Motor neuron (in vitro differentiated cells): ENCODE measurements at regions of chr21 and their contacts with region 1.

Region 1: GRCh38 chr21:39518138-39518846 is 66.5 kb downstream of the SH3BGR start:
- ATAC-seq: peak; percentile 65 to 89 (median 76)
- H3K4me3 ChIP-seq: no peak overlapping the region
- H3K27ac ChIP-seq: no peak overlapping the region
- H3K4me1 ChIP-seq: peaks cover 11 to 12% of the 10 kb centered on the region in 2 donors

Region 2: DNA sequence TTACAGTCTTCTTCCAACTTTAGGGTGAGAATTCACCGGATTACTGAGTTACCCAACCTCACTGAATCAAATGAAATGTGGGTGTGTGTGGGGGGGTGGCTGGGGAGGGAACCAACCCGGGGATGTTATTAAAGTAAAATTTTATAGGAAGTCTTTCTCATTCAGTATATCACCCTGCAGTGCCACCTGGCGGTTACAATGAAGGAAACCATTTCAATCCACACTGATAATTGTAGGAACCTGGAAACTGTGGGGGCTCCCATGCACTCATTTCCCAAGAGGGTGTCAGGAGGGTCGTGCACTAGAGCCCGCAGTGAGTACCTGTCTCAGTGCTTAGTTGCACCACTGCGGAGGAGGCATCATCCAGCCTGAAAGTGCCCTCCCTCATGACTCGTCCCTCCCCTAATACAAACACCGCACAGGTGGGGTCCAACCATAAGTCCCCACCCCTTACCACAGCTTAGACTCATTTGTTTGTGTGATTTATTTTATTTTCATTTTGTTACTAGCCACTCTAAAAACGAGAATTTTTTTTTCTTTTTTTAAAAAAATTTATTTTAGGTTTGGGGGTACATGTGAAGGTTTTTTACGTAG is 197.6 kb after region 1 on chr21:
- in situ Hi-C with region 1: loop called in 6 of 9 experiments (anchors 5 to 25 kb)
- ATAC-seq: peak in 5 of 8 experiments; percentile 27 to 52 (median 39)
- H3K4me3 ChIP-seq: no peak overlapping the region
- H3K27ac ChIP-seq: no peak overlapping the region
- H3K4me1 ChIP-seq: no peaks in the 10 kb centered on the region

Region 3: DNA sequence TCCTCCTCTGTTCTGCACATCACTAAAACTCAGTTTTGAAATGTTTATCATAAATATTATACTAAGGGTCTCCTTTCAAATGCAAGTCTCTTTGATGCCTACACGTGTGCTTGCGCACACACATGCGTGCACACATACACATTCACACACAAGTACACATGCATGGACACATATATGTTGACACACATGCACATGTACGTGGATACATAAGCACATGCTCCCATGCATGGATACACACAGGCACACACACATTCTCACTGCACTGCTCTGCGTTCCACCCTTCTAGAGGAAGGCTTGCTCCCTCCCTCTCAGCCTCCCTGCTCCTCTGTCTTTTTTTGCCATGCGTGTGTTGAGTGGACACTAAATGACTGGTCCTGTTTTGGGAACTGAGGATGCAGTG is 511.6 kb after region 1 on chr21:
- in situ Hi-C with region 1: no loop called
- ATAC-seq: no peak
- H3K4me3 ChIP-seq: no peak overlapping the region
- H3K27ac ChIP-seq: no peak overlapping the region
- H3K4me1 ChIP-seq: no peaks in the 10 kb centered on the region

Region 4: DNA sequence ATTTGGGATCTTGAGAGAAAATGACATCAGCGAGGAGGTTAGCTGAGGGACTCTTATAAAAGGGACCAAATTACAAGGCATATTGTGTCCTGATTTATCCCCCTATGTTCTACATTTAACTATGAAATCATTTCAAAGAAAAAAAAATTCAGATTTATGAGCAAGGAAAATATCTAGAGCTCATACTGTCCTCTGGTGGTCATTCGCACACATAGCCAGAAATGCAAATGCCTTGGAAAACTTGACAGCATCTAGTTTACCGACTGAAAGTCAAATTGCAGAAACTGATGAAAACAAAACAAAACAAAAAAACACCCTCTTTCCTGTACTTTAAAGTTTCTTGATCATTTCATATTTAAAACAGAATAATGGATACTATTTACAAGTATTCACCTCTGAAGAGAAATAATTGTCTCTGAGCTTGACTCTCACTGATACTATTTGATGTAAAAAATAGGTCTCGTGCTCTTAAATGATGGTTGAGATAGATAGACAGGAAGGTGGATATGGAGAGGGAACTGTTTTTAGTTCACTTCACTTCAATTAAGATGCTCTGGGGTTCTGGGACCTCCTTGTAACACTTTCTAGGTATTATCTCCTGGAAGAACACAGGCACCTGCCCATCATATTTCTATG is 602.8 kb after region 1 on chr21:
- in situ Hi-C with region 1: loop called in 3 of 9 experiments (anchors 25 kb)
- ATAC-seq: peak in 2 of 8 experiments; percentile 21 to 26
- H3K4me3 ChIP-seq: no peak overlapping the region
- H3K27ac ChIP-seq: no peak overlapping the region
- H3K4me1 ChIP-seq: peaks cover 0 to 2% of the 10 kb centered on the region in 2 donors